ENCODE measurements at regions of chr18 and their contacts with region 1.

Region 1: DNA sequence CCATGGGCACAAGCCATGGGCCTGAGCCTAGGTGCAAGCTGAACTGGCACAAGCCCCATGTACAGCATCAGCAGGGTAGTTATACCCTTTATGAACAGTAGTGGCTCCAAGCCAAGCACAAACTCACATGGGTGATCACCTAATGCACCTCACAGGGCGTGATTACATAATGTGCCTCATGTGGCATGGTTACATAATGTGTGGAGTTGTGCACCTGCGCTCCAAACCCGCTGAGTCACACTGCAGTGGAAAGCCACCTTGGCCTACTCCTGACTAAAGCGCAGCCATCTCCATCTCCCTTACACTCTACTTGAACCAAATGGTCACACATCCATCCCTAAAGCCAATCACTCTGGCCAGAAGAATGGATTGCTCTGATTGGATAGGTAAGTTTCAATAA is 279.7 kb downstream of the MBD2 start:
- DNase-seq: no peak
- H3K4me3 ChIP-seq: no peak overlapping the region
- H3K27ac ChIP-seq: no peak overlapping the region
- H3K4me1 ChIP-seq: peaks cover 33% of the 10 kb centered on the region
- H3K27me3 ChIP-seq: no peaks in the 10 kb centered on the region
- CTCF ChIP-seq: no peak

Region 2: GRCh38 chr18:54003195-54003594 is 58.5 kb after region 1 on chr18:
- CTCF ChIA-PET with region 1: no interaction called
- dilution Hi-C with region 1: no loop called
- in situ Hi-C with region 1: no loop called
- intact Hi-C with region 1: no loop called
- DNase-seq: no peak
- H3K4me3 ChIP-seq: no peak overlapping the region
- H3K27ac ChIP-seq: no peak overlapping the region
- H3K4me1 ChIP-seq: no peaks in the 10 kb centered on the region
- H3K27me3 ChIP-seq: no peaks in the 10 kb centered on the region
- CTCF ChIP-seq: no peak

Region 3: DNA sequence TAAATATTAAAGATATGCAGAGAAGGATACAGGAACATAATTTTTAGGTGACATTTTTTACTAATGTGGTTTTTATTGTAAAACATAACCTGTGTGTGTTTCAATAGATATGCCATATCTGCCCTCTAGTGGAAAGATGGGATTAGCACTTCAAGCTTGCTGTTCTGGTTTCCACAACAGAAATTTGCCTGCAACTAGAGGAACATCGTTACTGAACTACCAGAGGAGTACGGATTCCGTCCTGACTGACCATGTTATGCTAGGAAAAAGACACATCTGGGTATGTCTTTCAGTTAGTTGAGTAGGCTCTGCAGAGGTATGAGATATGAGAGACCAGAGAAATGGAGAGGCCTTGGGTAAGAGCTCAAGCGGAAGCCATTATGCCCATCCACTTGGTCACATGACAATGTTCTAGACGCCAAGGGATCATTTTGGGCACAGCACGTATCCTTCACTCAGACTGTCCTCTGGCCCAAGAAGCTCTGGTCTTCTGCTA is 174.9 kb after region 1 on chr18:
- CTCF ChIA-PET with region 1: no interaction called
- dilution Hi-C with region 1: no loop called
- in situ Hi-C with region 1: loop called in 1 of 2 experiments (anchors 25 kb)
- intact Hi-C with region 1: no loop called
- DNase-seq: peak; percentile 51
- H3K4me3 ChIP-seq: no peak overlapping the region
- H3K27ac ChIP-seq: no peak overlapping the region
- H3K4me1 ChIP-seq: no peaks in the 10 kb centered on the region
- H3K27me3 ChIP-seq: no peaks in the 10 kb centered on the region
- CTCF ChIP-seq: peak; percentile 80 to 95

Region 4: DNA sequence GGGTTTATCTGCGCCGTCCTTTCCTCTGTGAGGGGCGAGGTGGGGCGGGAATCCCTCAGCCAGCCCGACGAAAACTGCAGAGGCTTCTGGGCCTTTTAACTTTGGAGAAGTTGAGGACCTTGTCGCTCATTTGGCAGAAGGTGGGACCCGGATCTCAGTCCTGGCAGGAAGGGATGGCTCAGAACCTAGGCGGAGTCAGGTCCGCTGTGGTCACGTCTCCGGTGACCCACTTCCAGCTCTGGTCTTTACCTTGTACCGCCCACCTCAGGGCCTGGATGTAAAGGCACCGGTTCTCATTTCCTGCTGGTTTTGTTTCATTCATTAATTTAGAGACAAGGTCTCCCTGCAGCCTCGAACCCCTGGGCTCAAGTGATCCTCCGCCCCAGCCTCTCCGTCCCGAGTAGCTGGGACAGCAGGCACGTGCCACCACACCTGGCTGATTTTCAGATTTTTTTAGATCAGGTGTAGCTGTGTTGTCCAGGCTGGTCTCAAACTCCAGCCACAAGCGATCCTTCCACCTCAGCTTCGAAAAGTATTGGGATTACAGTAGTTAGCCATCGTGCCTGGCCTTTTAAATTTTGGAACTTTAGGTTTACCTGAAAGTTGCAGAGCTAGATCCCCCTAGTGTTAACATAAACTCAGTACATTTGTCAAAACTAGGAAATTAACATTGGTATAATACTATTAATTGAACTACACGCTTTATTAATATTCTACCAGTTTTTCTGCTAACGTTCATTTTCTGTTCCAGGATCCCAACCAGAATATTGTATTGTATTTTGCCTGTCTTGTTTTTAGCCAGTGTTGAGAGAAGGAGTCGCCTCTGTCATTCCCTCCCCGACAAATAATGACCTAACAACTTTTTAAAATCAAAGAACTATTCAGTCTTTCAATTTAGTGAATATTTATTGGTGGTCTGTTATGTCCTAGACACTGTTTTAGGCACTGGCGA is 325.4 kb after region 1 on chr18:
- CTCF ChIA-PET with region 1: no interaction called
- dilution Hi-C with region 1: no loop called
- in situ Hi-C with region 1: no loop called
- intact Hi-C with region 1: no loop called
- DNase-seq: peak; percentile 71
- H3K4me3 ChIP-seq: peak overlapping the region; percentile 50 to 61 (median 52)
- H3K27ac ChIP-seq: peak overlapping the region; percentile 90
- H3K4me1 ChIP-seq: peaks cover 10% of the 10 kb centered on the region
- H3K27me3 ChIP-seq: no peaks in the 10 kb centered on the region
- CTCF ChIP-seq: peak; percentile 37 to 66